ENCODE measurements at regions of chr7 and their contacts with region 1.

Region 1: GRCh38 chr7:71332207-71332606 is 200.3 kb downstream of the GALNT17 start:
- DNase-seq: no peak
- H3K4me3 ChIP-seq: no peak overlapping the region
- H3K4me3 Mint-ChIP-seq: no peak overlapping the region
- H3K27ac Mint-ChIP-seq: no peak overlapping the region
- H3K4me1 ChIP-seq: no peaks in the 10 kb centered on the region
- H3K4me1 Mint-ChIP-seq: no peaks in the 10 kb centered on the region
- H3K27me3 ChIP-seq: no peaks in the 10 kb centered on the region
- H3K27me3 Mint-ChIP-seq: no peaks in the 10 kb centered on the region
- CTCF ChIP-seq: no peak

Region 2: GRCh38 chr7:70710011-70710480 is 622.2 kb before region 1 on chr7:
- CTCF ChIA-PET with region 1: no interaction called
- POLR2A ChIA-PET with region 1: interaction called, 11 read pairs
- intact Hi-C with region 1: no loop called
- DNase-seq: peak; percentile 55 to 67
- H3K4me3 ChIP-seq: no peak overlapping the region
- H3K4me3 Mint-ChIP-seq: peak overlapping the region; percentile 40
- H3K27ac Mint-ChIP-seq: peak overlapping the region; percentile 51
- H3K4me1 ChIP-seq: peaks cover 27% of the 10 kb centered on the region
- H3K4me1 Mint-ChIP-seq: peaks cover 16% of the 10 kb centered on the region
- H3K27me3 ChIP-seq: no peaks in the 10 kb centered on the region
- H3K27me3 Mint-ChIP-seq: no peaks in the 10 kb centered on the region
- CTCF ChIP-seq: no peak